ENCODE measurements at regions of chr1 and their contacts with region 1.

Region 1: GRCh38 chr1:23273450-23274133 is 56.3 kb upstream of the HTR1D start:
- DNase-seq: peak; percentile 95
- ATAC-seq: peak; percentile 89
- H3K4me3 ChIP-seq: no peak overlapping the region
- H3K27ac ChIP-seq: peak overlapping the region; percentile 12; the same call in 1 of the 2 replicates
- H3K4me1 ChIP-seq: no peaks in the 10 kb centered on the region; the same call in 1 of the 2 replicates
- H3K27me3 ChIP-seq: no peaks in the 10 kb centered on the region
- CTCF ChIP-seq: no peak
- POLR2A ChIP-seq: no peak
- RAD21 ChIP-seq: no peak

Region 2: GRCh38 chr1:23196639-23197328 is 76.8 kb before region 1 on chr1:
- CTCF ChIA-PET with region 1: no interaction called
- POLR2A ChIA-PET with region 1: no interaction called
- dilution Hi-C with region 1: no loop called
- in situ Hi-C with region 1: no loop called
- intact Hi-C with region 1: loop called (anchors 5 kb)
- DNase-seq: peak; percentile 98
- ATAC-seq: peak; percentile 71
- H3K4me3 ChIP-seq: no peak overlapping the region
- H3K27ac ChIP-seq: peak overlapping the region; percentile 92
- H3K4me1 ChIP-seq: peaks cover 18% of the 10 kb centered on the region
- H3K27me3 ChIP-seq: no peaks in the 10 kb centered on the region
- CTCF ChIP-seq: no peak
- POLR2A ChIP-seq: peak; percentile 72
- RAD21 ChIP-seq: no peak

Region 3: DNA sequence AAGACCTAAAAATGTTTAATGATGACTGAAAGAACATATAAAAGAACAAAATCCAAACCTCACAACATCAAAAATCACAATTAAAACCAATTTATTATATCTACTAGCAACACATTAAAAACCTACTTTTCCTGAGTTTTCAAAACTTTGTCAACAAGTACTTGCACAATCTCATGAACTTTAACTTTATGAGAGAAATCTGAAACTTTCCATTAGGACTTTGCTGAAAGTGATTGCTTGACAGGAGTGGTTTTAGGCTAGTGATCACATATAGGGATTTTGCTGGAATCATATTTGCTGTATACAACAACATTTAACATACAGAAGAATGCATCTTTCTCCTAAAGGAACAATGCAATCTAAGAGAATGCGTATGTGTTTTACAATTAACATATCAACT is 57.3 kb after region 1 on chr1:
- CTCF ChIA-PET with region 1: no interaction called
- POLR2A ChIA-PET with region 1: no interaction called
- dilution Hi-C with region 1: no loop called
- in situ Hi-C with region 1: no loop called
- intact Hi-C with region 1: no loop called
- DNase-seq: no peak
- ATAC-seq: no peak
- H3K4me3 ChIP-seq: no peak overlapping the region
- H3K27ac ChIP-seq: no peak overlapping the region
- H3K4me1 ChIP-seq: peaks cover 2% of the 10 kb centered on the region
- H3K27me3 ChIP-seq: no peaks in the 10 kb centered on the region
- CTCF ChIP-seq: no peak
- POLR2A ChIP-seq: no peak
- RAD21 ChIP-seq: no peak

Region 4: GRCh38 chr1:23362218-23362713 is 88.7 kb after region 1 on chr1:
- CTCF ChIA-PET with region 1: no interaction called
- POLR2A ChIA-PET with region 1: no interaction called
- dilution Hi-C with region 1: no loop called
- in situ Hi-C with region 1: no loop called
- intact Hi-C with region 1: no loop called
- DNase-seq: no peak
- ATAC-seq: no peak
- H3K4me3 ChIP-seq: no peak overlapping the region
- H3K27ac ChIP-seq: no peak overlapping the region
- H3K4me1 ChIP-seq: no peaks in the 10 kb centered on the region; the same call in 1 of the 2 replicates
- H3K27me3 ChIP-seq: no peaks in the 10 kb centered on the region
- CTCF ChIP-seq: no peak
- POLR2A ChIP-seq: no peak
- RAD21 ChIP-seq: no peak